ENCODE measurements at regions of chr9 and their contacts with region 1.

Region 1: GRCh38 chr9:32490601-32491000 is 35.4 kb downstream of the RIGI start:
- DNase-seq: no peak
- H3K4me3 Mint-ChIP-seq: no peak overlapping the region
- H3K27ac Mint-ChIP-seq: no peak overlapping the region
- H3K4me1 Mint-ChIP-seq: no peaks in the 10 kb centered on the region
- H3K27me3 Mint-ChIP-seq: no peaks in the 10 kb centered on the region

Region 2: DNA sequence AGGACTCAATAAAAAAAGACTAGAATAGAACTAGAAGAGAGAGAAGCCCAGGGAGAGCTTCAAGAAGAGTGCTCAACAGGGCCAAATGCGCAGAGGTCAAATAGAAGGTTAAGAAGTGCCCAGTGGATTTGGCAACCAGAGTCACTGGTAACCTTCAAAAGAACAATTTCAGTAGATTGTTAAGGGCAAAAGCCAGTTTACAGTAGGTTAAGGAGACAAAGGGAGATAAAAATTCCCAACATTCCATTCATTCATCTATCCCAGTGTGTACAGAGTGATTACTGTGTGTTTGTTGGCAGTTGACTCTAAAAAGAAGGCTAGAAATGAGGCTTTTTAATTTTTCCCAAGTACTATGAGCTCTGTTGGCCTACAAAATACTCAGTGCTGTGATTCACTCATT is 34.0 kb before region 1 on chr9:
- intact Hi-C with region 1: loop called (anchors 5 kb)
- DNase-seq: no peak
- H3K4me3 Mint-ChIP-seq: no peak overlapping the region
- H3K27ac Mint-ChIP-seq: no peak overlapping the region
- H3K4me1 Mint-ChIP-seq: no peaks in the 10 kb centered on the region
- H3K27me3 Mint-ChIP-seq: no peaks in the 10 kb centered on the region